Activated CD4-positive, alpha-beta T cell treated with anti-CD3 and anti-CD28 coated beads, Interleukin-2, amount 10 ng/mL, durations not matched to agents 24 days and 14 days (primary cell): ENCODE measurements at regions of chrX and their contacts with region 1.

Region 1: DNA sequence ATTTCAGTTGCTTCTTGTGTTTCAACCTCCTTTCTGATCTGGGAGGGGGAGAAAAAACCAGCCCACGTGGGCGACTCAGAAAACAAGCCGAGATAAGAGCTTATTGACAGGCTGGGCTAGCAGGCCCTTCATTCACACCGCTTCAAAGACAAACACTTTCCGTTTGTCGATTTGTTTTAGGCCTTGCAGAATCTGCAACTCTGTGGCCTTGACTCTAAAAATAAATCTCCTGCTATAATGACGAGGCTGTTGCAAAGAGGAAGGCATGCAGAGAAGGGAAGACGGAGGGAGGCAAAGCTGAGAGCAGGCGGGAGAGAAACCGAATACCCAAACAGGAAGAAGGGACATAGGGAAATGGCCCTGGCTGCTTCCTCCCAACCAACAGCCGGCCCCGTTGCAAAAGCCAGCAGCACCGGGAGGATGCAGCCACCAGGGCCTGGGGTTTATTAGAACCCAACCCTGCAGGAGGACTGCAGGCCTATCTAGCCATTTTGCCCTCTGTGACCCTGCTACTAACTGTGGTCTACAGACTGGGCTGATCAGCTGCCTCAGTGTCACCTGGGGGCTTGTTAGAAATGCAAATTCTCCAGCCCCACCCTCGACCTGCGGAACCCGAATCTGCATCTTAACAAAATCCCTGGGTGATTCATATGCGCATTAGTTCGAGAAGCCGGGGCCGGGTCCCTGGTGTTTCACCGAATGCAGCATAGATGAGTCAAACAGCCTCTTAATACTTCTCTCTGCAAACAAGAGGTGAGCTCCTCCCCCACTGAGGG is 325.5 kb downstream of the BCOR start:
- DNase-seq: peak; percentile 81
- H3K4me3 Mint-ChIP-seq: peak overlapping the region; percentile 82
- H3K27ac Mint-ChIP-seq: peak overlapping the region; percentile 99
- H3K4me1 Mint-ChIP-seq: peaks cover 37% of the 10 kb centered on the region
- H3K27me3 Mint-ChIP-seq: no peaks in the 10 kb centered on the region

Region 2: DNA sequence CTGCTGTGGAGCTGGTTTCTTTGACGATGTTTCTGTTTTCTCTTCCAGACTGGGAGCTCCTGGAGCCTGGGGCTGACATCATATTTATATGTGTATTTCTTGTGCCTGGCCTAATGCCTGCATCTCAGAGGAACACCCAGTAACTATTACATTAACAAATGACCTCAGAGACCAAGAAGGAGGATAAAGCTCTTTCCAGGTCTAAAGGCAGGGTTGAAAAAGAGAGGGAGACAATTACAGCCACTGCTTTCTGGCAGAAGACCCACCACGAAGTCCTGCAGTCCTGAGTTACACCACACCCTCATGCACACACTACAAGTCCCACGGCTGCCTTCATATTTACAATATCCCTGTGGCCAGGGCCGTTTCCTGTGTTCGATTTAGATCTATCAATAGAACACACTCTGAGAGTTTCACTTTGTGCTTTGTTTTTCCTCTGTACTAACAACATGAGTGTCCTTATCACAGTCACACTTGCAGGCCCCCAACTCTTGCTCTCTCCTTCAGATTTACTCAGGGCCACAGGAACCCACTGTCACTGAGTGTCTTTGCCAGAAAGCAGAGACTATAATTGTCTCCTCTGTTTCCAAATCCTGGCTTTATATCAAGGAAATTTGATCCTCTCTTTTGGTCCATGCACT is 435.5 kb before region 1 on chrX:
- intact Hi-C with region 1: loop called (anchors 10 kb)
- DNase-seq: peak; percentile 78
- H3K4me3 Mint-ChIP-seq: peak overlapping the region; percentile 55
- H3K27ac Mint-ChIP-seq: peak overlapping the region; percentile 95
- H3K4me1 Mint-ChIP-seq: peaks cover 34% of the 10 kb centered on the region
- H3K27me3 Mint-ChIP-seq: no peaks in the 10 kb centered on the region

Region 3: GRCh38 chrX:39361736-39362135 is 410.5 kb before region 1 on chrX:
- intact Hi-C with region 1: no loop called
- DNase-seq: no peak
- H3K4me3 Mint-ChIP-seq: no peak overlapping the region
- H3K27ac Mint-ChIP-seq: no peak overlapping the region
- H3K4me1 Mint-ChIP-seq: peaks cover 2% of the 10 kb centered on the region
- H3K27me3 Mint-ChIP-seq: no peaks in the 10 kb centered on the region

Region 4: GRCh38 chrX:39730662-39731397 is 41.4 kb before region 1 on chrX:
- intact Hi-C with region 1: loop called (anchors 5 kb)
- DNase-seq: peak; percentile 85
- H3K4me3 Mint-ChIP-seq: peak overlapping the region; percentile 28
- H3K27ac Mint-ChIP-seq: peak overlapping the region; percentile 74
- H3K4me1 Mint-ChIP-seq: peaks cover 19% of the 10 kb centered on the region
- H3K27me3 Mint-ChIP-seq: no peaks in the 10 kb centered on the region

Region 5: DNA sequence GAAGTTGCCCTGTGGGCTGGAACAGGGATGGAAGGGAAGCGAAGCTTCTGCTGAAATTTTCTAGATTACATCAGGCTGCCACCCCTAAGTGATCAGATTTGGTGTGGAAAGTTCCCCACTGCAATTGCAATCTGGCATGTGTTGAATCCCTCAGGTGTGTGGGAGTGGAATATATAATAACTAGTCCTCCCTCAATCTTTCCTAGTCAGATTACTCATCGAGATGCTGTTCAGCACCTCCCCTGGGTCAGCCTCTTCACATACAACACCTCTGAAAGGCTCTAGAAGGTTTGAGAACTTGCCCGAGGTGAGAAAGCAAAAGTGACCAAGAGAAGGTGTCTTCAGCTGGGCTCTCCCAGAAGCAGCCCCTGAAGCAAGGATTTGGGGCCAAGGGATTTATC is 11.3 kb before region 1 on chrX:
- intact Hi-C with region 1: loop called (anchors 1 kb)
- DNase-seq: no peak
- H3K4me3 Mint-ChIP-seq: peak overlapping the region; percentile 61
- H3K27ac Mint-ChIP-seq: peak overlapping the region; percentile 92
- H3K4me1 Mint-ChIP-seq: peaks cover 22% of the 10 kb centered on the region
- H3K27me3 Mint-ChIP-seq: no peaks in the 10 kb centered on the region

Region 6: GRCh38 chrX:39874202-39874816 is 102.1 kb after region 1 on chrX:
- intact Hi-C with region 1: loop called (anchors 5 kb)
- DNase-seq: peak; percentile 87
- H3K4me3 Mint-ChIP-seq: peak overlapping the region; percentile 19
- H3K27ac Mint-ChIP-seq: peak overlapping the region; percentile 85
- H3K4me1 Mint-ChIP-seq: peaks cover 34% of the 10 kb centered on the region
- H3K27me3 Mint-ChIP-seq: peaks cover 3% of the 10 kb centered on the region

Region 7: DNA sequence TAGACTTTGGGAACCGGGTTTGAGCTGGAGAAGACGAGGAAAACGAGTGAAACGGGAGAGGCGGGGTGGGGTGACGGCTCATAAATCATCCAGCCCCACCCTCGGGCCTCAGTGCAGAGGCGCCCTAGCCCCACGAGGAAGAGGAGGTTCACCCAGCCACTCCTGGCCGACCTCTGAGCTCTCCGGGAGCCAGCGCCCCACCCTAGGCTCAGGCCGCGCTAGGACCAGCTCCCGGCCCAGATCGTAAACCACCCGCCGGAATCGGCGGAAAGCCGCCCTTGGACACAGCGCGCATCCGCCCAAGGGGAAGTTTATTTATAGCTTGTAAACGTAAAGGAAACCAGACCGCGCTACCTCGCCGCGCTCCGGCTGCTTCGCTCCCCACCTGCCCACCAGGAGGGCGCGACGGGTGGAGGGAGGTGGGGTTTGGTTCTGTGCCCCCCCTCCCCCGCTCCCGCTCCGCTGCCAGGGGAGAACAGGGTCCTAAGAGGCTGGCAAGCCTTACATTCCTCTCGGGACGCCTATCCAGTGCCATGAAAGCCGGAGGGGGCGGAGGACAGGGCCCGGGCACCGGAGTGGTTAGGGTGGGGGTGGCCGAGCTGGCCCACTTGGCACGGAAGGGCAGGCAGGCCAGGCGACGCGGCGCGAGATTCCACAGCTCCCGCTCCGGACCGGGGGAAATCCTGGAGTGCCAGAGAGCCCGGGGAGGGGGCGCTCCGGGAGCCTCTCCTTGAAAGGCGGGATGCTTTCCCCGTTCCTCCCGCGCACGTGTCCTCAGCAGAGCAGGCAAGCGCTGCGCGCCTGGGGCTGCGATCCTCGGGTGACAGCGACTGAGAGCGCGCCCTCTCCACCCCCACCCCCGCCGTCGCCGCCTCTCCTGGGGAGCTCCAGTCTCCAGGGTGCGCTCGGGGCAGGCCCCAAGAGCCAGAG is 241.3 kb after region 1 on chrX:
- intact Hi-C with region 1: loop called (anchors 5 kb)
- DNase-seq: peak; percentile 86
- H3K4me3 Mint-ChIP-seq: peak overlapping the region; percentile 80
- H3K27ac Mint-ChIP-seq: peak overlapping the region; percentile 88
- H3K4me1 Mint-ChIP-seq: peaks cover 18% of the 10 kb centered on the region
- H3K27me3 Mint-ChIP-seq: peaks cover 11% of the 10 kb centered on the region